ENCODE measurements at regions of chr11 and their contacts with region 1.

Region 1: GRCh38 chr11:13668102-13668956 is at the start of gene FAR1:
- H3K4me3 Mint-ChIP-seq: peak within 1 kb of the TSS; percentile 92
- H3K27ac Mint-ChIP-seq: peak within 1 kb of the TSS; percentile 93
- H3K4me1 Mint-ChIP-seq: peaks cover 38% of the 10 kb centered on the region
- H3K27me3 Mint-ChIP-seq: peaks cover 9% of the 10 kb centered on the region

Region 2: DNA sequence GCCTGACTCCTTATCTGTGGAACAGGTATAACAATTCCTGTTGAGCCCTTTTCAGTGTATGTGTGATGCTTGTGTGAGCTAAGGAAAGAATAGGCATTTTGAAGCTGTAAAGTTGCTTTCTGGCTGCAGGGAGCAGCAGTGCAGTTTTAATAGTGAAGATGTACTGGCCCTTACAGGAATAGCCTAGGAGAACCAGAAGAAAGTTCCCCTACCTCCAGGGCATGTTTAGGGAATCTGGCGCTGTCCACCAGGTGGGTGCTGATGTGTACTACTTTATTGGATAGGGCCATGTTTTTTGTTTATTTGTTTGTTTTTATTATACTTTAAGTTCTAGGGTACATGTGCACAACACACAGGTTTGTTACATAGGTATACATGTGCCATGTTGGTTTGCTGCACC is 379.2 kb before region 1 on chr11:
- intact Hi-C with region 1: no loop called
- H3K4me3 Mint-ChIP-seq: no peak overlapping the region
- H3K27ac Mint-ChIP-seq: no peak overlapping the region
- H3K4me1 Mint-ChIP-seq: peaks cover 57% of the 10 kb centered on the region
- H3K27me3 Mint-ChIP-seq: no peaks in the 10 kb centered on the region

Region 3: GRCh38 chr11:13462901-13463778 is 205.2 kb before region 1 on chr11 and contains the start of gene BTBD10:
- intact Hi-C with region 1: loop called (anchors 2 kb)
- H3K4me3 Mint-ChIP-seq: peak within 1 kb of the TSS; percentile 99
- H3K27ac Mint-ChIP-seq: peak within 1 kb of the TSS; percentile 100
- H3K4me1 Mint-ChIP-seq: peaks cover 35% of the 10 kb centered on the region
- H3K27me3 Mint-ChIP-seq: no peaks in the 10 kb centered on the region

Region 4: GRCh38 chr11:13705710-13706109 is 37.4 kb after region 1 on chr11:
- intact Hi-C with region 1: loop called (anchors 5 kb)
- H3K4me3 Mint-ChIP-seq: no peak overlapping the region
- H3K27ac Mint-ChIP-seq: no peak overlapping the region
- H3K4me1 Mint-ChIP-seq: no peaks in the 10 kb centered on the region
- H3K27me3 Mint-ChIP-seq: no peaks in the 10 kb centered on the region

Region 5: GRCh38 chr11:14722496-14722895 is 1054.2 kb after region 1 on chr11:
- intact Hi-C with region 1: no loop called
- H3K4me3 Mint-ChIP-seq: no peak overlapping the region
- H3K27ac Mint-ChIP-seq: no peak overlapping the region
- H3K4me1 Mint-ChIP-seq: peaks cover 10% of the 10 kb centered on the region
- H3K27me3 Mint-ChIP-seq: no peaks in the 10 kb centered on the region

Region 6: GRCh38 chr11:14892036-14892567 is 1223.8 kb after region 1 on chr11 and contains the start of gene CYP2R1:
- intact Hi-C with region 1: loop called (anchors 10 kb)
- H3K4me3 Mint-ChIP-seq: peak within 1 kb of the TSS; percentile 98
- H3K27ac Mint-ChIP-seq: peak within 1 kb of the TSS; percentile 91
- H3K4me1 Mint-ChIP-seq: peaks cover 62% of the 10 kb centered on the region
- H3K27me3 Mint-ChIP-seq: no peaks in the 10 kb centered on the region